ENCODE measurements at regions of chr18 and their contacts with region 1.

Region 1: DNA sequence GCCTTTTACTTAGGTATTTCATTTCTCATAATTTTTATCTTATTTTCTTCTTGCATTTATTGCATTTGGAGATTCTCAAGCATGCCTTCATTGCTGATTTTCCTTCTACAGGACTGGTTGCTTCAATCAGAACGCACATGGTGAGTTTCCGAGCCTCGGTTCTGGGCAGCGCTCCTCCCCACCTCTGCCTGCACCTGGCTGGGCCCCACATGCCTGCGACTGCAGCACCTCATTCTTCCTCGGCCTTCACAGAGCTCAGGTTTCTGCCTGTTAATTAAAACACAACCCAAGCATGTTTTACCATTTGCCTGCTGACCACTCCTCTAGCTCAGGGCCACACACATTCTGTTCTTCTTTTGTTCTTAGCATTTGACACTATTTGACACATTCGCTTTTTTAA is 398.8 kb downstream of the GALR1 start:
- DNase-seq: no peak
- H3K4me3 ChIP-seq: no peak overlapping the region
- H3K27ac ChIP-seq: no peak overlapping the region
- H3K4me1 ChIP-seq: no peaks in the 10 kb centered on the region
- H3K27me3 ChIP-seq: peaks cover 0 to 10% of the 10 kb centered on the region in 2 donors
- CTCF ChIP-seq: no peak

Region 2: DNA sequence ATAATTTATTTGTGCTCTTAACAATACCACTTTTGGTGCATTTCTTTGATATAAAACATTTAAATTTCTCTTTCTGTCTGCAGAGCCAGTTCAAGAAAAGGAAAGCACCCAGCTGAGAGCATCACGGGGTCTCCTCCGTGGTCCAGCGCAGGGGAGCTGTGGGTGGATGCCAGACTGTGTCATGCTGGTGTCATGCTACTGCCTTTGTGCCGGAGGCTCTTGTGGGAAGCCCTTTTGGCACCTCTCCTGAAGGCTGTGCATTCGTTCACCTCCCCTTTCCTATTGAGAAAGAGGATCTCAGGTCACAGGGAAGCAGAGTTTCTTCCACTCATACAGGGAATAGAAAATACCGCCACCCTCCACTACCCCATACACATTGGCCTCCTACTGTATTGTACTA is 51.6 kb after region 1 on chr18:
- intact Hi-C with region 1: loop called (anchors 1 kb)
- DNase-seq: no peak
- H3K4me3 ChIP-seq: no peak overlapping the region
- H3K27ac ChIP-seq: no peak overlapping the region
- H3K4me1 ChIP-seq: no peaks in the 10 kb centered on the region
- H3K27me3 ChIP-seq: no peaks in the 10 kb centered on the region
- CTCF ChIP-seq: no peak

Region 3: GRCh38 chr18:78459668-78460067 is 811.3 kb after region 1 on chr18:
- intact Hi-C with region 1: no loop called
- DNase-seq: no peak
- H3K4me3 ChIP-seq: no peak overlapping the region
- H3K27ac ChIP-seq: no peak overlapping the region
- H3K4me1 ChIP-seq: no peaks in the 10 kb centered on the region
- H3K27me3 ChIP-seq: no peaks in the 10 kb centered on the region
- CTCF ChIP-seq: no peak